WTC11 (cell line): ENCODE measurements at regions of chr1 and their contacts with region 1.

Region 1: DNA sequence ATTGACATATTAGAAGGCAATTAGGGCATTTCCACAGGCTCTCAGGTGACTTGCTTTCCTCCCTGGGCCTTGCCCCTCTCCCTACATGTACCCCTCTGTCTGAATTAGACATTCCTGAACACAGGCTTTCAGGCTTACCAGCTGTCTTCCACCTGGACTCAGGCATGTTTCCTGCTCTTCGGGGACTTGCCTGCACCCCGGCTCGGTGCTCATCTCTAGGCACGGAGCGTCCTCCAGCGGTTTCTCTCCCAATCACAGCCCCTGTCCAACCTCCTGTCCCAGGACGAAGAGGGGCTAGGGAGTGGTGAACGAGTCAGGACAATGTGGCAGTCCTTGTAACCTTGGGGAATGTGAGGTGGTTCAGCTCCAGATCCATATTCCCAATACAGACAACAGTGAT is 4.2 kb downstream of the PROK1 start:
- DNase-seq: peak; percentile 74
- ATAC-seq: peak; percentile 90
- H3K4me3 Mint-ChIP-seq: no peak overlapping the region
- H3K27ac Mint-ChIP-seq: peak overlapping the region; percentile 63; the same call in 1 of the 2 replicates
- H3K4me1 Mint-ChIP-seq: peaks cover 15% of the 10 kb centered on the region
- H3K27me3 Mint-ChIP-seq: no peaks in the 10 kb centered on the region; the same call in 1 of the 2 replicates
- CTCF ChIP-seq: no peak

Region 2: GRCh38 chr1:110203021-110203661 is 252.0 kb before region 1 on chr1:
- CTCF ChIA-PET with region 1: interaction called, 132 read pairs
- POLR2A ChIA-PET with region 1: no interaction called
- DNase-seq: peak; percentile 62
- ATAC-seq: peak; percentile 56
- H3K4me3 Mint-ChIP-seq: no peak overlapping the region
- H3K27ac Mint-ChIP-seq: no peak overlapping the region
- H3K4me1 Mint-ChIP-seq: peaks cover 4% of the 10 kb centered on the region
- H3K27me3 Mint-ChIP-seq: no peaks in the 10 kb centered on the region
- CTCF ChIP-seq: peak; percentile 74

Region 3: GRCh38 chr1:110338886-110339406 is 116.2 kb before region 1 on chr1 and contains the start of gene RBM15:
- CTCF ChIA-PET with region 1: interaction called, 37 read pairs
- POLR2A ChIA-PET with region 1: no interaction called
- DNase-seq: peak; percentile 96
- ATAC-seq: peak; percentile 84
- H3K4me3 Mint-ChIP-seq: no peak within 1 kb of the TSS
- H3K27ac Mint-ChIP-seq: no peak within 1 kb of the TSS; the same call in 1 of the 2 replicates
- H3K4me1 Mint-ChIP-seq: peaks cover 52% of the 10 kb centered on the region
- H3K27me3 Mint-ChIP-seq: no peaks in the 10 kb centered on the region
- CTCF ChIP-seq: no peak
- total RNA-seq, gene RBM15: 43.5 to 50.6 TPM (median 44.8 TPM) in 3 replicates

Region 4: DNA sequence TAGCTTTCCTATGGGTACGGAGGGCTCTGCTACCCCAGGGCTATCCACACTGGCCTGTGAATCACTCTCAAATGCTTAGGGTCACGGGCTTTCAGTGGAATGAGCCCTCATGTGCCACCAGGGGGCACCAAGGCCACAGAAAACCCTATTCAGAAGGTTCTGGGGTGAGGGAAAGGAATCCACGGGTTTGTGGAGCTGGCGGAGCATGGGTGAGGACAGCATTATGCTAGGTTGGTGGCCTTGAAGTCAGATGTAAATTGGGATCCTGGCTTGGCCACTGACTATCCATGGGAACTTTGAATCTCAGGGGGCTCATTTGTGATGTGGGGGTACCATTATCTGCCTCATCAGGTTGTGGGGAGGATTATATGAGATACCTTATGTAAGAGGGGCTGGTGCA is 42.6 kb before region 1 on chr1:
- CTCF ChIA-PET with region 1: interaction called, 188 read pairs
- POLR2A ChIA-PET with region 1: interaction called, 4 read pairs
- DNase-seq: peak; percentile 82
- ATAC-seq: peak; percentile 78
- H3K4me3 Mint-ChIP-seq: no peak overlapping the region
- H3K27ac Mint-ChIP-seq: no peak overlapping the region
- H3K4me1 Mint-ChIP-seq: peaks cover 23% of the 10 kb centered on the region
- H3K27me3 Mint-ChIP-seq: peaks cover 2% of the 10 kb centered on the region; the same call in 1 of the 2 replicates
- CTCF ChIP-seq: peak; percentile 55; the same call in 1 of the 2 replicates

Region 5: GRCh38 chr1:110433803-110434202 is 21.3 kb before region 1 on chr1:
- CTCF ChIA-PET with region 1: interaction called, 27 read pairs
- POLR2A ChIA-PET with region 1: interaction called, 3 read pairs
- DNase-seq: peak; percentile 68
- ATAC-seq: peak; percentile 96
- H3K4me3 Mint-ChIP-seq: no peak overlapping the region
- H3K27ac Mint-ChIP-seq: no peak overlapping the region
- H3K4me1 Mint-ChIP-seq: peaks cover 21% of the 10 kb centered on the region
- H3K27me3 Mint-ChIP-seq: no peaks in the 10 kb centered on the region
- CTCF ChIP-seq: no peak